Right ventricle myocardium inferior (tissue), 1 donor: ENCODE measurements at regions of chr7 and their contacts with region 1.

Region 1: DNA sequence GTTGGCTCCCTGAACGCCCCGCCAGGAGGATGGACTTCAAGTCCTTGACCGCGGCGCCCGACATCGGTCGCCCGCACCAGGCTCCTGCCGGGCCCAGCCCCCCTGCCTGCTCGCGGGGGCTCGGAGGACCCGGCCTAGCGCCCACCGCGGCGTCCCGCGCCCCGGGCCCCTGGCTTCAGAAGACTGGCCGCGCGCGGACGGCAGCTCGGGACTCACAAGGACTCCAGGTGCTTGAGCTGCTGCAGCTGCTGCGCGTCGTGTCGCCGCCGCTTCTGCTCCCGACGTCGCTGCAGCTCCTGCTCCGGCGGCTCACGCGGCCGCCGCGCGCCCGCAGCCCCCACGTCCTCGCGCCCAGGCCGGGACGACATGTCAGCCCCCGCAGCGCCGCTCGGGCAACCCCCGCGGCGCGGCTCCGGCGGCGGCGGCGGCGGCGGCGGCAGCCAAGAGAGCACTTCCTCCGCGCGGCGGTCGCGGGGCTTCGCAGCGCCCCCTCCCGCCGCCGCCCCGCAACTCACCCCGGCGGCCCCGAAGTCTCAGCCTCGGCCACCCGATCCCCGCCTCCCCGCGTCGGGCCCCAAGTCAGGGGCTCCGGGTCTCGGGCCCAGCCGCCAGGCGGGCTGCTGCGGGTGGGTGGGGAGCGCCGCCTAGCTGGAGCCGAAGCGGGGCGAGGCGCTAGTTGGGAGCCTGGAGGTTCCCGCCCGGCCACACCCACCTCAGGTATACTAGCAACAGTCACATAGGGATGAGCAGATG is at the start of gene RP9:
- DNase-seq: peak; percentile 88
- ATAC-seq: peak; percentile 89
- total RNA-seq, gene RP9: 20.0 TPM

Region 2: DNA sequence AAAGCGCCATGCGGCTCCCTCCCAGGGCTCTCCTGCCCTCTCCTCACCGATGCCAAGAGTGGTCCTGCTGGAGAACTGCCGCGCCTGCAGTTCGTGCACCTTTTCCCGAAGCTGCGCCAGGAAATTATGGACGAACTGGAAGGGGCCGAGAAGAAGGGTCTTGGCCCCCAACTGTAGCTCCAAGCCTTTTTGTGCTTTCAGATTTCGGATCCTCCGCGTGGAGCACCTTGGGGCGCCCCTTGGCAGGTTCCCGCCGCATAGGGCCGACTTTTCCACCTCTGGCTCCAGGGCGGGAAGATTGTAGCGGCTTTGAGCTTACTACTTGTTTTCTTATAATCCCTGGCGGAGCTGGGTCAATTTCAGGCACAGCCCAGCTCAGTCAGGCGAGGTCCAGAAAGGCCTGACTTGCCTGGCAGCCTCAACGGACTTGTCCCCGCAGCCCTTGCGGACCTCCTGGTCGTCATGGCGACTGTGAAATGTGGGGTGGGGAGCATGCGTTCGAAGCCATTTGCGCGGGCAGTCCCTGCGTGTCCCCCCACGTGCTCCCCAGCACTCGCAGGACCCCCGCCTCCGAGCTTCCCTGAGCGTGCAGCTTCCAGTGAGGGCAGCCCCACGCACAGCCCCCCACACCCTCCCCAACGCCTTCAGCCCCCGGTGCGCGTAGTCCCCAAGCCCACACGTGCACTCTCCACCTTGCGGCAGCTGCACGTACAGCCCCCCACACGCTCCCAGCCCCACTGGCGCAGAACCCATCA is 347.6 kb before region 1 on chr7:
- intact Hi-C with region 1: loop called (anchors 10 kb)
- DNase-seq: no peak
- ATAC-seq: no peak

Region 3: DNA sequence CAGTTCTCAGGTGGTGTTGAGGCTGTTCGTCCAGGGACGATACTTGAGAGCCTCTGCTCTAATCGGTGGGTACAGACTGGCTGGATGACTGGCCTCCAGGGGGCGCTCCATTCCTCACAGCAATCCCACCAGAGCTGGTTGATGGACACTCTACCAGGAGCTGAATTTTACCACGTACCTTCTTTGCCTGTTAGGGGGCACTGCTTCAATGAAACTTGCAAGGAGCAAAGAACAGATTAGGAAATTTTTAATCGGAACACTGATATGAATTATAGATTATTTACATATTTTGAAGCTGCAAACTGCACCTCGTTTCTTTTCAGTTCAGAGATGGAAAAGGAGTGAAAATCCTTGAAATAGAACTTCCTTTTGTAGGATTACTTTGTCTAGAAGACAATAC is 262.5 kb before region 1 on chr7:
- intact Hi-C with region 1: loop called (anchors 2 kb)
- DNase-seq: peak; percentile 92
- ATAC-seq: peak; percentile 99

Region 4: DNA sequence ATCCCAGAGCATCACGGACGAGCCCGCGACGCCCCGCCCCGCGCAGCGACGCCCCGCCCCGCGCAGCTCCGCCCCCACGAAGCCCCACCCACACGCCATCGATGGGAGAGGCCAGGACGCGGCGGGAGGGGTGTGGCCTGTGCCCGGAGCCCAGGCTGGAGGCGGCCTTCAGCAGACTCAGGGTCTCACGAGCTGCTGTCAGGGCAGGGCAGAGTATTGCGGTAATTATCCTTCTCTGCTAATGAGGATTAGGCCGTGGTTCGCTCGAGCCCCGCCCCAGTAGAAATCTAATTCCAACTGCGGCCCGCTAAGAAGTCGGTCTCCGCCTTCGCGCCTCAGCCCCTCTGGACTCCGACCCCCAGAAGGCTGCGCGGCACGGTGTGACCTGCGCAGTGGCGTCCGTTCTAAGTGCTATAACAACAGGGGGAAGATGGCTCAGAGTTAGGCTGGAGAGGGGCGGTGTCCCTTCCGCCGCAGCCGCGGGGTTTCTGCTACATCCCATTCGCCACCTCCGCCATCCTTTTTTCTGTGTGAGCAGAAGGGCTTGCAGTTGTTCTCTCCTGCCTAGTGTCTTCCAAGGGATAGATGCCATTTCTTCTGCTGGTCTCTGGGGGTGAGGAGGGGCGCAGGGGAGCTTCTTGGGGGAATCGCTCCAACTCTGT is 46.3 kb before region 1 on chr7:
- intact Hi-C with region 1: loop called (anchors 5 kb)
- DNase-seq: peak; percentile 96
- ATAC-seq: peak; percentile 99